Activated CD4-positive, alpha-beta memory T cell treated with anti-CD3 and anti-CD28 coated beads for 36 hours (primary cell): ENCODE measurements at regions of chr15 and their contacts with region 1.

Region 1: DNA sequence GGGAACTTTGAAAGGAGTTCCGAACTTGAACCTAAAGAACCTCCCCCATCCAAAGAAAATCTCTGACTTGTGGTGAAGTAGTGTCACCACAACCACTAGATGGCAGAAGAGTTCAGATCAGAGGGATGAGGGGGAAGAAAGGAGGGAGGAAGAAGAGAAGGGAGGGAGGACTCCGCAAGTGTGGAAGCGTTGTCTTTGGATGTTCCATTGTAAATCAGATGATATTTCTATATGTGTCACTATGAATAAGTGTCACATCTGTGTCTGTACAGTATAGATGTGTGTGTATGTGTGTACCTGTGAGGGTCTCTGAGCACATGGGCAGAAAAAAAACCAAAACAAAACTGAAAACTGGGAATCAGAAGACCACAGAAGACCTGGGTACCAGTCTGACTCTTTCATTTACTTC is 16.9 kb downstream of the SLC24A1 start:
- DNase-seq: peak; percentile 33
- H3K4me3 Mint-ChIP-seq: no peak overlapping the region
- H3K27ac Mint-ChIP-seq: no peak overlapping the region
- H3K4me1 Mint-ChIP-seq: peaks cover 6% of the 10 kb centered on the region
- H3K27me3 Mint-ChIP-seq: no peaks in the 10 kb centered on the region

Region 2: DNA sequence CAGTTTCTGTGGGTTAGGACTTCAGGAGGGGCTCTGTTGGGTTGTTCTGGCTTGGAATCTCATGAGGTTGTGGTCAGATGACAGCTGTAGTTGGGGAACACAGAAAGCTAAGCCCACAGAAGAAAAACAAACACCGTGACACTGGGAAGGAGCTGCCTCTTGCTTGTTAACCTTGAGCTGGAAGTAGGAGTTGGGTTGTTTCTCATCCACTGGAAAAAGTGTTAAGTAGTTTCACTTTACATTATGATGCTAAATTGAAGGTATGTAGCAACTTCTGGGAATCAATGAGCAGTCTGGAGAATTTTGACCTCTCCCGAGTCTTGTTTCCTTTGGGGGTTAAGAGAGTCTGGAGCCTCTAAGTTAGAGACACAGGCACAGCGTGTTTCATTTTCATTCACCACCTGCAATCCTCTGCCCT is 88.0 kb before region 1 on chr15:
- CTCF ChIA-PET with region 1: no interaction called
- POLR2A ChIA-PET with region 1: no interaction called
- intact Hi-C with region 1: no loop called
- DNase-seq: no peak
- H3K4me3 Mint-ChIP-seq: no peak overlapping the region
- H3K27ac Mint-ChIP-seq: no peak overlapping the region
- H3K4me1 Mint-ChIP-seq: peaks cover 15% of the 10 kb centered on the region
- H3K27me3 Mint-ChIP-seq: no peaks in the 10 kb centered on the region

Region 3: GRCh38 chr15:65610871-65611718 is 27.6 kb before region 1 on chr15 and contains the start of gene INTS14:
- CTCF ChIA-PET with region 1: interaction called, 14 read pairs
- POLR2A ChIA-PET with region 1: no interaction called
- intact Hi-C with region 1: no loop called
- DNase-seq: peak; percentile 97
- H3K4me3 Mint-ChIP-seq: peak within 1 kb of the TSS; percentile 97
- H3K27ac Mint-ChIP-seq: peak within 1 kb of the TSS; percentile 97
- H3K4me1 Mint-ChIP-seq: peaks cover 27% of the 10 kb centered on the region
- H3K27me3 Mint-ChIP-seq: no peaks in the 10 kb centered on the region
- total RNA-seq, gene INTS14: 42.5 to 42.7 TPM

Region 4: DNA sequence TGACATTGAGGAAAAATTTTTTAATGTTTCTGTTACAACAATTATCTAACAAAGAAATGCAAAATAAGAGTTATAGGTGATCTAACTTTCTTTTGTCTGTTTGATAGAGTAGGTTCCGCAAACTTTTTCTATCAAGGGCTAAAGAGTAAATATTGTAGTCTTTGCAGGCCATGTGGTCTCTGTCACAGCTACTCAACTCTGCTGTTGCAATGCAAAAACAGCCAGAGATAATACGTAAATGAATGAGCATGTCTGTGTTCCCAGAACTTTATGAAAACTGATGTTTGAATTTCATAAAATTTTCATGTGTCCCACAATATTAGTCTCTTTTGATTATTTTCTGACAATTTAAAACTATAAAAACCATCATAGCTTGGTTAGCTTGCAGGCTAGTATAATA is 56.4 kb after region 1 on chr15:
- CTCF ChIA-PET with region 1: no interaction called
- POLR2A ChIA-PET with region 1: no interaction called
- intact Hi-C with region 1: no loop called
- DNase-seq: no peak
- H3K4me3 Mint-ChIP-seq: no peak overlapping the region
- H3K27ac Mint-ChIP-seq: no peak overlapping the region
- H3K4me1 Mint-ChIP-seq: no peaks in the 10 kb centered on the region
- H3K27me3 Mint-ChIP-seq: no peaks in the 10 kb centered on the region

Region 5: GRCh38 chr15:65773386-65774111 is 134.9 kb after region 1 on chr15:
- CTCF ChIA-PET with region 1: no interaction called
- POLR2A ChIA-PET with region 1: no interaction called
- intact Hi-C with region 1: no loop called
- DNase-seq: peak; percentile 52
- H3K4me3 Mint-ChIP-seq: no peak overlapping the region
- H3K27ac Mint-ChIP-seq: peak overlapping the region; percentile 53
- H3K4me1 Mint-ChIP-seq: peaks cover 40% of the 10 kb centered on the region
- H3K27me3 Mint-ChIP-seq: no peaks in the 10 kb centered on the region

Region 6: DNA sequence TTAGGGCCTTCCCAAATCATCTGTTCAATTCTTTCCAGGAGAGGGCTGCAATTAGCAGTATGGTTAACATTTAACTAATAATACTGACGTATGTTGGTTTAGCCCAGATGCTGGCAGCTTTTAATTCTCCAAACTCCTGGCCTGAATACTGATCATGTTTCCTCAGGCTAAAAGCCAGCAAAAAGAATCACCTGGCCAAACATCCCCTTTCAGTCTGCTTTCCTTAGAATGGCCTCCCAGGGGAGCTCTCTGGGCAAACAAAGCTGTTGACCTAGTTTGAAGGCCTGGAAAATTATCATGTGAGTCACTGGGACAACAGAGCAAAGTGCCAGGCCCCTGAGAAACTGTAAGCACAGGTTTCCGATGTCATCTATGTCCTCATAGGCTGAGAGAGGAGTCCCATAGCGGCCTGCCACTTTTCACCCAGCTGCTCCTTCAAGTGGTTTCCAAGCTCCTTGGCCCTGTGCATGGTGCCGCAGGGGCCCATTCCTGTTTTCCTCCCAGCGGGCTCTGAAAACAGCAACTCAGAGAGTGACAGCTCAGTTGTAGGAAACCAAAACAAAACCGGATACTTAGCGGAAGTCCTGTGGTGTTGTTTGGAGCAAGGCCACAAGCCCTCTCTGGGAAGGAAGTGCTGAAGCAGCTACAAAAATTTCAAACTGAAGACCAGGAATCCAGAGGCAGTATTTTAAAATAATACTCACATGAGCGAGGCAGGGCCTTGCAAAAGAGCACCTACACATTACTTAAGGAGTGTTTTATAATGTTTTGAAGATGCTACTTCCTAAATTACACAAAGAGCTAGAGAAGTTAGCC is 194.1 kb after region 1 on chr15:
- CTCF ChIA-PET with region 1: interaction called, 6 read pairs
- POLR2A ChIA-PET with region 1: no interaction called
- intact Hi-C with region 1: loop called (anchors 2 kb)
- DNase-seq: peak; percentile 72
- H3K4me3 Mint-ChIP-seq: peak overlapping the region; percentile 68
- H3K27ac Mint-ChIP-seq: peak overlapping the region; percentile 94
- H3K4me1 Mint-ChIP-seq: peaks cover 45% of the 10 kb centered on the region
- H3K27me3 Mint-ChIP-seq: no peaks in the 10 kb centered on the region

Region 7: DNA sequence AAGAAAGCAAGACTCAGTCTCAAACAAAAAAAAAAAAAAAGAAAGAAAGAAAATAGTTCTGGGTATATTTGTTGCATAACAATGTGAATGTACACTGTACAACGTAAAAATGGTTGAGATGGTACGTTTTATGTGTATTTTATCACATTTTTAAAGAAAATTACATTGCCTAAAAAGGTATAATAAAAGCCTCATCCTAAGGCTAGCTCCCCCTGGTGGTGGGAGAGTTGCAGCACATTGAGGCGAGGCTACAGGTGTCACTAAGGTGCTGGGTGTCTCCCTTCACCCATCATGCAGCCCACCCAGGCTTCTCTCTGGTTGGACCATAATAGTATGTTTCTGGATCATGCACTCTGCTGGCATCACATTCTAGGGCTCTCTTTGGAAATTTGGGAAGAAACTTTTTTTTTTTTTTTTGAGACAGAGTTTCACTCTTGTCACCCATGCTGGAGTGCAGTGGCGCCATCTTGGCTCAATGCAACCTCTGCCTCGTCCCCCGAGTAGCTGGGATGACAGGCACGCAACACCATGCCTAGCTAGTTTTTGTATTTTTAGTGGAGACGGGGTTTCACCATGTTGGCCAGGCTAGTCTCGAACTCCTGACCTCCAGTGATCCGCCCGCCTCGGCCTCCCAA is 218.3 kb after region 1 on chr15:
- CTCF ChIA-PET with region 1: interaction called, 38 read pairs
- POLR2A ChIA-PET with region 1: no interaction called
- intact Hi-C with region 1: loop called (anchors 1 kb)
- DNase-seq: peak; percentile 85
- H3K4me3 Mint-ChIP-seq: peak overlapping the region; percentile 35
- H3K27ac Mint-ChIP-seq: no peak overlapping the region
- H3K4me1 Mint-ChIP-seq: peaks cover 8% of the 10 kb centered on the region
- H3K27me3 Mint-ChIP-seq: no peaks in the 10 kb centered on the region

Region 8: GRCh38 chr15:66193066-66193465 is 554.4 kb after region 1 on chr15:
- CTCF ChIA-PET with region 1: no interaction called
- POLR2A ChIA-PET with region 1: no interaction called
- intact Hi-C with region 1: loop called (anchors 5 kb)
- DNase-seq: no peak
- H3K4me3 Mint-ChIP-seq: no peak overlapping the region
- H3K27ac Mint-ChIP-seq: no peak overlapping the region
- H3K4me1 Mint-ChIP-seq: peaks cover 3% of the 10 kb centered on the region
- H3K27me3 Mint-ChIP-seq: peaks cover 2% of the 10 kb centered on the region